Mammary epithelial cell (primary cell): ENCODE measurements at regions of chr2 and their contacts with region 1.

Region 1: GRCh38 chr2:10448208-10448645 is at the start of gene ODC1:
- DNase-seq: peak; percentile 88
- H3K4me3 ChIP-seq: peak within 1 kb of the TSS; percentile 46 to 61 (median 61)
- H3K27ac ChIP-seq: peak within 1 kb of the TSS; percentile 45
- H3K4me1 ChIP-seq: peaks cover 31% of the 10 kb centered on the region
- H3K27me3 ChIP-seq: no peaks in the 10 kb centered on the region
- CTCF ChIP-seq: no peak
- total RNA-seq, gene ODC1: 64.0 to 161 TPM

Region 2: GRCh38 chr2:9877733-9878125 is 570.5 kb before region 1 on chr2:
- CTCF ChIA-PET with region 1: no interaction called
- dilution Hi-C with region 1: no loop called
- in situ Hi-C with region 1: no loop called
- intact Hi-C with region 1: no loop called
- DNase-seq: no peak
- H3K4me3 ChIP-seq: no peak overlapping the region
- H3K27ac ChIP-seq: no peak overlapping the region
- H3K4me1 ChIP-seq: no peaks in the 10 kb centered on the region
- H3K27me3 ChIP-seq: no peaks in the 10 kb centered on the region
- CTCF ChIP-seq: no peak

Region 3: GRCh38 chr2:10302479-10303180 is 145.6 kb before region 1 on chr2 and contains the start of gene HPCAL1:
- CTCF ChIA-PET with region 1: interaction called, 10 read pairs
- dilution Hi-C with region 1: no loop called
- in situ Hi-C with region 1: no loop called
- intact Hi-C with region 1: no loop called
- DNase-seq: peak; percentile 80
- H3K4me3 ChIP-seq: peak within 1 kb of the TSS; percentile 58 to 89 (median 87)
- H3K27ac ChIP-seq: no peak within 1 kb of the TSS
- H3K4me1 ChIP-seq: peaks cover 19% of the 10 kb centered on the region
- H3K27me3 ChIP-seq: no peaks in the 10 kb centered on the region
- CTCF ChIP-seq: peak; percentile 28 to 65
- total RNA-seq, gene HPCAL1: 26.3 to 82.8 TPM

Region 4: DNA sequence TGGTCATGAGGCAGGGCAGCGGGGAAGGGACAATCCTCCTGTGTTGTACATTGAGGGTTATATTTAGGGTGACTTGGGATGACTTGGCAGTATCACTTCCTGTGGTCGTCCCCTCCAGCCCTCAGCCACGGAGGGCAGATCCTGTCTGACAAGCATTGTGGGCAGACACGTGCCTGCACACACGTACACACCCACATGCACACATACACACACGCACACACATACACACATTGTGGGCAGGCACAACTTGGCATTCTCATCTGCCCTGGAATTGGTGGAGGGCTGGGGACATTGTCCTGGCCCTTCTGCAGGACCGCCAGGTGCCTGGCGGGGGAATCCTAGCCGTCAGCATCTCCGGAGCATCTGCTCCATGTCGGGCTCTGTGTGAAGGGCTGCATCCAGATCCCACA is 47.7 kb before region 1 on chr2:
- CTCF ChIA-PET with region 1: no interaction called
- dilution Hi-C with region 1: no loop called
- in situ Hi-C with region 1: no loop called
- intact Hi-C with region 1: no loop called
- DNase-seq: no peak
- H3K4me3 ChIP-seq: no peak overlapping the region
- H3K27ac ChIP-seq: no peak overlapping the region
- H3K4me1 ChIP-seq: peaks cover 36% of the 10 kb centered on the region
- H3K27me3 ChIP-seq: no peaks in the 10 kb centered on the region
- CTCF ChIP-seq: no peak

Region 5: DNA sequence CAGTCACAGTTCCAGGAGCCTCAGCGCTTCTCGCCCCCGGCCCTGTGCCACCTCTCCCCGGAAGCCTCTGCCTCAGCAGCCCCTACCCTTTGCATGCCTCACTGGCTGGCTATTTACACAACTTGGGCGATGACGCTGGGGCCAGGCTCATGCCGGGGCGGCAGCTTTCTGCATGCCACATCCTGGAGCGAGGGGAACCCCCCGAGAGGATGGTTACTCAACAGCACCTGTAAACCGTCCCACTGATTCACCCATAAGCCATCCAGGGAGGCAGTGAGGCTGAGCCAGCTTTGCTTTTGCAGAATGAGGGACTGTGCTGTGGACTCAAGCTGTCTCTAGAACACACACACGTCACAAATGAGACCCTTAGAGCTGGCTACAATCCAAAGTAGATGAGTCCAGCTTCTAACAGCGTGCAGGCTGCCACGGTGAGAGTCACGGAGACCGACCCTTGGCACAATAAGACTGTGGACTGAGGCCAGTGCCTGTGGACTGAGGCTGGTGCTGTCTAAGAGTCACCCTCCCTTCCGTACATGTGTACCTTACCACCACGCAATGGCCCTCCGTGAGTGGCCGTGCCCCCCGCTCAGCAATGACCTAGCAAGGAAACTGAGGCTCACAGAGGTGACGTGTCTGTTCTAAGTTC is 45.5 kb after region 1 on chr2:
- CTCF ChIA-PET with region 1: no interaction called
- dilution Hi-C with region 1: loop called (anchors 5 kb)
- in situ Hi-C with region 1: no loop called
- intact Hi-C with region 1: loop called (anchors 1 kb)
- DNase-seq: peak; percentile 99
- H3K4me3 ChIP-seq: no peak overlapping the region
- H3K27ac ChIP-seq: peak overlapping the region; percentile 91
- H3K4me1 ChIP-seq: peaks cover 37% of the 10 kb centered on the region
- H3K27me3 ChIP-seq: no peaks in the 10 kb centered on the region
- CTCF ChIP-seq: no peak

Region 6: DNA sequence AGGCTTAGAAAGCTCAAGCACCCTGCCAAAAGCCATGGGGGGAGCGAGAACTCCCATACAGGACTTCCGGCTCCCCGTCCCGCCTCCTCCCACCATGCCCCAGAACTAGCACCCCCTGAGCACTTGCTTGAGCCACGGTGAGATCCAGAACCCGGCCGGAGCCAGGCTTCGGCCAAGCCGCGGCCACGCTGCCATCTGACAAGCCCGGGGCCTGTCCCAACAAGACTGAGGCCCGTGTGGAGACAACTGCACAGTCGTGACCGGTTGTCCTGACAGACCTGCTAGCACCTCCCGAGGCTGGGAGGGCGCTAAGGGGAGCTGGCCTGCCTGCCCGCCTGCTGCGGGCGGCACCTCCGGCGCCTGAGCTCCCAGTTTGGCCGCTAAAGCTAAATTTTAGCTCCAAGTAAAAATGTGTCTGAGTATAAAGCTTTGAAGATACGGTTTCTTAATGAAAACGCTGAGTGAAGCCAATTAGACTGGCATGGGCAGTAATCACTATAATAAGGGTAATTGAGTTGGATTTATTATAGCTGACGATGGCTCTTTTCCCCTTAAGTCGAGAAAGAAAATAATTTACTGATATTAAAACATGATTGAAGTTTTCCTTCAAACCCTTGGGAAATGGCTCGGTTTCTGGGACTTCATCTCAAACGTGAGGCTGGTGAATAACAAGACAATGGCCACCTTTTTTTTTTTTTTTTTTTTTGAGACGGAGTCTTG is 78.2 kb after region 1 on chr2:
- CTCF ChIA-PET with region 1: no interaction called
- dilution Hi-C with region 1: loop called (anchors 5 kb)
- in situ Hi-C with region 1: no loop called
- intact Hi-C with region 1: no loop called
- DNase-seq: no peak
- H3K4me3 ChIP-seq: no peak overlapping the region
- H3K27ac ChIP-seq: no peak overlapping the region
- H3K4me1 ChIP-seq: peaks cover 9% of the 10 kb centered on the region
- H3K27me3 ChIP-seq: no peaks in the 10 kb centered on the region
- CTCF ChIP-seq: no peak

Region 7: DNA sequence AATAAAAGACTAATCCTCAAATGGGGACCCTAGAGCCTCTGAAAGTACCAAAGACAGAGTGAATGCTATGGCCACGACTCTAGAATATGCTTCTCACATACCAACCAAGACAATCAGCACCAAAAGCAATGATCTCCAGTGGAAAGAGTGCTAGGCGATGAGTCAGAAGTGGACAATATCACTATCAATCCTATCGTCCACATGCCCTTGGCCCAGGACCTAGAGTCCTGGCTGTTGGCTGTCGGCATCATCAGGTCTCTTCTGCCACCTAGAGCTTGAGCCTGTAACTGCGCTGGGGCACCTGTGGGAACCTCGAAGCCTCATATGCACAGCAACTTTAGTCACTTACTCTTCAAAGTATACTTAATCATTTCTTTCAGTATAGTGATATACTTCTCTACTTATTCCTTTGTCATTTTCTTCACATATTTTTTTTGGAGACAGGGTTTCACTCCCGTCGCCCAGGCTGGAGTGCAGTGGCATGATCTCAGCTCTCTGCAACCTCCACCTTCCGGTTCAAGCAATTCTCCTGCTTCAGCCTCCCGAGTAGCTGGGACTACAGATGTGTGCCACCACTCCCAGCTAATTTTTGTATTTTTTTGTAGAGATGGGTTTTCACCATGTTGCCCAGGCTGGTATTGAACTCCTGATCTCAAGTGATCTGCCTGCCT is 211.8 kb after region 1 on chr2:
- CTCF ChIA-PET with region 1: no interaction called
- dilution Hi-C with region 1: loop called (anchors 5 kb)
- in situ Hi-C with region 1: loop called in 1 of 2 experiments (anchors 5 kb)
- intact Hi-C with region 1: loop called (anchors 1 kb)
- DNase-seq: peak; percentile 52
- H3K4me3 ChIP-seq: no peak overlapping the region
- H3K27ac ChIP-seq: no peak overlapping the region
- H3K4me1 ChIP-seq: peaks cover 30% of the 10 kb centered on the region
- H3K27me3 ChIP-seq: no peaks in the 10 kb centered on the region
- CTCF ChIP-seq: peak; percentile 76 to 78

Region 8: DNA sequence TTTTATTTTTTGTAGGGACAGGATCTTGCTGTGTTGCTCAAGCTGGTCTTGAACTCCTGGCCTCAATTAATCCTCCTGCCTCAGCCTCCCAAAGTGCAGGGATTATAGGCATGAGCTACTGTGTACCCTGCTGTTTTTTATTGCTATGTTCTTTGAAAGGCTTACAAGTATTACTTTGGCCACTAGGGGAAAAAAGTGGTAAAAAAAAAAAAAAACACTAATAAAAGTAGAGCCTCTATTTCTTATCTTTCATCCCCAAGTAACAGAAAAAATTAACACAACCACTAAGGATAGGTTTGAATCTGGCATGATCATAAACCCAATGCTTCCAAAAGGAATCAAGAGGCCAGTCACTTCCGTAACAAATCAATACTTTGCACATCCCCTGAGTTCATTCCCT is 230.0 kb after region 1 on chr2:
- CTCF ChIA-PET with region 1: no interaction called
- dilution Hi-C with region 1: no loop called
- in situ Hi-C with region 1: loop called in 1 of 2 experiments (anchors 10 kb)
- intact Hi-C with region 1: no loop called
- DNase-seq: no peak
- H3K4me3 ChIP-seq: no peak overlapping the region
- H3K27ac ChIP-seq: no peak overlapping the region
- H3K4me1 ChIP-seq: no peaks in the 10 kb centered on the region
- H3K27me3 ChIP-seq: no peaks in the 10 kb centered on the region
- CTCF ChIP-seq: peak; percentile 18